ENCODE measurements at regions of chr9 and their contacts with region 1.

Region 1: DNA sequence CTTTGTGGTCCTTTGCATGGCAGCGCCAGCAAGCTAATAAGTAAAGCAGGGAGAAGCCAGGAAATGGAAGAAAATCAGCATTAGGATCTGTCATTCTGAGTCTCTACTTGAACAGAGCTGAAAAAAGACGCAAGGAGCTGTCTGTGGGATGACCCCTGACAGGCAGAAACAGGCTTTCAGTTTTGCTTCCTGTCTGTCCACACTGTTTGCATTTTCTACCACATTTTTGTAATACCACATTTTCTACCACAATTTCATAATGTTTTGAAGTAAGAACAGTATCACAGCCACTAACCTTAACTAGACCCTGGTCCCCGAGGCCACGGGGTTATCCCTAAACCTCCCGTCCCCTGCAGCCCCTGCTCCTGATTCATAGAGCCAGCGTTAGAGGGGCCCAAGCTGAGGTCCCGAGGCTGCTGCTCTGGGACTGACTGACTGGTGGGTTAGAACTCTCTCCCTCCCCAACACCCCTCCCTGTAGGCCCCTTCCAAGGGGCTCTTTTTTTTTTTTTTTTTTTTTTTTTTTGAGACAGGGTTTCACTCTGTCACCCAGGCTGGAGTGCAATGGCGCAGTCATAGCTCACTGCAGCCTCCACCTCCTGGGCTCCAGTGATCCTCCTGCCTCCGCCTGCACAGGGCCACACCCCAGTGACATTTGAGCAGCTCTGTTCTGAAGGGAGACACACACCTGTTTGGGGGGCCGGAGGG is 4.0 kb upstream of the CLIC3 start:
- DNase-seq: peak; percentile 22
- H3K4me3 Mint-ChIP-seq: peak overlapping the region; percentile 32
- H3K27ac Mint-ChIP-seq: peak overlapping the region; percentile 72
- H3K4me1 Mint-ChIP-seq: peaks cover 26% of the 10 kb centered on the region
- H3K27me3 Mint-ChIP-seq: peaks cover 13% of the 10 kb centered on the region

Region 2: GRCh38 chr9:136975644-136976043 is 24.7 kb before region 1 on chr9:
- intact Hi-C with region 1: no loop called
- DNase-seq: no peak
- H3K4me3 Mint-ChIP-seq: no peak overlapping the region
- H3K27ac Mint-ChIP-seq: no peak overlapping the region
- H3K4me1 Mint-ChIP-seq: peaks cover 6% of the 10 kb centered on the region
- H3K27me3 Mint-ChIP-seq: peaks cover 9% of the 10 kb centered on the region

Region 3: DNA sequence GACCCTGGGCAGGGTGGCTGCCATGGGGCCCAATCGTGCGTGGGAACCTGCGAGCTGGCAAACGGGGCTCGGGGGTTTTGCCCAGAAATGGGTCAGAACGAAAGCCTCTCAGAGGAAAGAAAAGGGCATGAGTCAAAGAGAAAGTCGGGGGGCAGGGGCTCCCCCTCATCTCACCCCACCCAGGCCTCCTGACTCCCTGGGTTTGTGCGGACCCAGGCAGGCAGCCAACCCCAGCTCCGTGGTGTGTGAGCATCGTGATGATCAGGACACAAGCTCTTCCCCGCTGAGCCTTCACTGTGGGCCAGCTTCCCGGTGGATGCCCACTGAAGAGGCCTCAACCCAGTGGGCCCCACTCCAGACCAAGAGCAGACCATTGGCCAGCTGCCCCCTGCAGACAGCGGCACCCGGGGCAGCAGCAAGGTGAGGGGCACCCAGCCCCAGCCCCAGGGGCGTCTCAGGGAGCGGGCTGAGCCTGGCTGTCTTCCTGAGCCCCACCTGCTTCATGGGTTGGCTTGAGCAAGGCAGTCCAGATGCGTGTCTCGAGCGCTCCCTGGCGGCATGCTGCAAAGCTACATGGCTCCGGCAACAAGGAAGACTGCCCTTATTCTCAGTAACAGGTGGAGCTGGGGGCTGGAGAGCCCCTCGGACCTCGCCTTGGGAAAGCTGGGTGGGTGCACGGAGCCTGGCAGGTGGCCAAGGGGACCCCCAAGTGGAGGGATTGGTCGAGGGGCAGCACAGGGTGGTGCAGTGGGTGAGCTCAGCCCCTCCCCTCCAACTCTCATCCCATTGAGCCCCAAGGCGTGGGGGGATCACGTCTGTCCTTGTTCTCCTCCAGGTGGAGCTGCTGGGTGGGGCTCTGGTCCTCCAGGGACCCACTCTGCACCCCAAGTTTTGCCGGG is 34.8 kb after region 1 on chr9:
- intact Hi-C with region 1: loop called (anchors 1 kb)
- DNase-seq: peak; percentile 79
- H3K4me3 Mint-ChIP-seq: peak overlapping the region; percentile 67
- H3K27ac Mint-ChIP-seq: peak overlapping the region; percentile 87
- H3K4me1 Mint-ChIP-seq: peaks cover 29% of the 10 kb centered on the region
- H3K27me3 Mint-ChIP-seq: no peaks in the 10 kb centered on the region

Measured in activated T-helper 1 cell treated with anti-CD3 and anti-CD28 coated beads, Interleukin-12 subunit alpha, Interleukin-12 subunit beta, Interleukin-2, Interleukin-4 antibody, amounts not matched to agents 30 ng/mL and 10 ng/mL and 1 ng/mL, durations not matched to agents 14 hours and 24 hours and 36 hours (primary cell).